Right ventricle myocardium superior (tissue), 1 donor: ENCODE measurements at regions of chr3 and their contacts with region 1.

Region 1: GRCh38 chr3:120245386-120245785 is 39.6 kb downstream of the GPR156 start:
- DNase-seq: no peak
- ATAC-seq: no peak

Region 2: GRCh38 chr3:120348981-120349818 is 103.8 kb after region 1 on chr3 and contains the start of gene LRRC58:
- intact Hi-C with region 1: loop called (anchors 5 kb)
- DNase-seq: peak; percentile 96
- ATAC-seq: peak; percentile 98
- total RNA-seq, gene LRRC58: 7.9 TPM